ENCODE measurements at regions of chr12 and their contacts with region 1.

Region 1: DNA sequence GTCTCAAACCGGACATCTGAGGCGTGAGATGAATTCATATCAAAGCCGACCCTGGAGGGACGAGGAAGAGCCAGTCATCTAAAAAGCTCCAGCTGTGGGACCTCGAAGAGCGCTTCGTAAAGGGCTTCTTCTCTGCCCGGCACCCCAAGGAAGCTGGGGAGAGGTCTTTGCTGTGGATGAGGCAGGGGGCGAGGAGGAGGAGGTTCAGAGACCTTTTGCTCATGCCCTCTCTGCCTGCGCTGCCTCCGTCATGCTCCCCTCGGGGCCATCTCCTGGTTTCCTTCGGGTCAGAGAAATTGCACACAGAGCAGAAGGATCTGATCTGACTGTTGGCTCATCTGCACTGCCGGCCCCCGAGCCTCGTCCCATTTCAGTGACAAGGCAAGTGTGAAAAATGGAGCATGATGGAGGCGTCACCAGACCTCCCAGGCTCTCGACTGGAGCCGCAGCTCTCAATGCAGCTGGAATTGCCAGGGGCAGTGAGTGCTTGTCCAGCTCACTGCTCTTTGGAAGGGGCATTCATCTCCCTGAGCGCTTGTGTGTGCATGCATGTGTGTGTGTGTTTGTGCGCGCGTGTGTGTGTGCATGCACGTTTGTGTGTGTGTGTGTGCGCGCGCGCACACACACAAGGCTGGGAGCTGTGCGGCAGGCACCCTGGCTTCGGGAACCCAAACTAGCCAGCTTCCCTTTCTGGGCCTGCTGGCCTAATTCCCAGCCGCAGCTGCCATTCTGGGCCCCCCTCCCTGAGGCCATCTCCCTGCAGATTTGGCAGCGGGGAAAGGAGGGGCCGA is 9.2 kb downstream of the CABP1 start:
- DNase-seq: no peak
- H3K4me3 ChIP-seq: peak overlapping the region; percentile 62
- H3K27ac ChIP-seq: no peak overlapping the region
- H3K27me3 ChIP-seq: peaks cover 40% of the 10 kb centered on the region
- CTCF ChIP-seq: no peak

Region 2: GRCh38 chr12:120662879-120663278 is 13.2 kb after region 1 on chr12:
- CTCF ChIA-PET with region 1: interaction called, 27 read pairs
- POLR2A ChIA-PET with region 1: no interaction called
- DNase-seq: no peak
- H3K4me3 ChIP-seq: no peak overlapping the region
- H3K27ac ChIP-seq: no peak overlapping the region
- H3K27me3 ChIP-seq: peaks cover 20% of the 10 kb centered on the region
- CTCF ChIP-seq: no peak

Region 3: GRCh38 chr12:120686690-120687577 is 37.3 kb after region 1 on chr12 and contains the start of gene MLEC:
- CTCF ChIA-PET with region 1: interaction called, 26 read pairs
- POLR2A ChIA-PET with region 1: interaction called, 6 read pairs
- DNase-seq: peak; percentile 89
- H3K4me3 ChIP-seq: peak within 1 kb of the TSS; percentile 91
- H3K27ac ChIP-seq: peak within 1 kb of the TSS; percentile 95
- H3K27me3 ChIP-seq: no peaks in the 10 kb centered on the region
- CTCF ChIP-seq: no peak
- polyA plus RNA-seq, gene MLEC: 76.7 and 84.2 TPM in 2 replicates

Region 4: GRCh38 chr12:120938496-120938895 is 288.9 kb after region 1 on chr12:
- CTCF ChIA-PET with region 1: interaction called, 10 read pairs
- POLR2A ChIA-PET with region 1: no interaction called
- DNase-seq: no peak
- H3K4me3 ChIP-seq: no peak overlapping the region
- H3K27ac ChIP-seq: no peak overlapping the region
- H3K27me3 ChIP-seq: peaks cover 3% of the 10 kb centered on the region
- CTCF ChIP-seq: no peak

Region 5: DNA sequence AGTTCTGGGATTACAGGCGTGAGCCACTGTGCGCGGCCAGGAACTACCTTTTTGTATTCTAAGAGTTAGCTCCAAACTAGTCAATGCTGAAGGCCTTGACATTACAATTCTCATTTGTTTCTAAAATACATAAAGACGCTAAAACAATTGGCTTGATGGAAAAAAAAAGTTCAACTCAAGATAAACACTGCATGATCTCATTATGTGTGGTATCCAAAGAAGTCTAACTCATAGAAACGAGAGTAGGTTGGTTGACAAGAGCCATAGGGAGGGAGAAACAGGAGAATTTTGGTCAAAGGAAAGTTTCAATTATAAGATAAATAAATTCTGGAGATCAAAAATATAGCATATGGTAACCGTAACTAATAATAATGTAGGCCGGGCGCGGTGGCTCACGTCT is 730.3 kb after region 1 on chr12:
- CTCF ChIA-PET with region 1: no interaction called
- POLR2A ChIA-PET with region 1: interaction called, 12 read pairs
- DNase-seq: no peak
- H3K4me3 ChIP-seq: no peak overlapping the region
- H3K27ac ChIP-seq: no peak overlapping the region
- H3K27me3 ChIP-seq: no peaks in the 10 kb centered on the region
- CTCF ChIP-seq: no peak

Region 6: GRCh38 chr12:121452340-121452984 is 802.8 kb after region 1 on chr12:
- CTCF ChIA-PET with region 1: no interaction called
- POLR2A ChIA-PET with region 1: no interaction called
- DNase-seq: no peak
- H3K4me3 ChIP-seq: no peak overlapping the region
- H3K27ac ChIP-seq: no peak overlapping the region
- H3K27me3 ChIP-seq: no peaks in the 10 kb centered on the region
- CTCF ChIP-seq: no peak